ENCODE measurements at regions of chr17 and their contacts with region 1.

Region 1: DNA sequence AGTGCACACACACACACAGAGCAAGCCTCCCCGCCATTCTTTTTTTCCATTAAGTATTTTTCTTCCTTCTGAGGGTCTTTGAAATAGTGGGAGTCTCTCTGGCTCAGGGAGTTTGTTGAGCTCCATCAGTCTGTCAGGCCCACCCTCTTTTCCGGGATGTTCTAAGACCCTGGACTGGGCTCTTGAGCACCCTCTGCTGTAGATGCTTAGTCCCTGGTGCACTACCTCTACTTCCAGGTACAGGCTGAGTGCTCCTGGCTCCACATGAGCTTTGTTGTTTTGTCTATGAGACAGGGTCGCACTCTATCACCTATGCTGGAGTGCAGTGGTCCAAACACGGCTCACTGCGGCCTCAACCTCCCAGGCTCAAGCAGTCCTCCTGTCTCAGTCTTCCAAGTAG is 20.7 kb downstream of the LIMD2 start:
- DNase-seq: no peak
- H3K4me3 ChIP-seq: no peak overlapping the region
- H3K27me3 ChIP-seq: no peaks in the 10 kb centered on the region
- CTCF ChIP-seq: no peak

Region 2: GRCh38 chr17:63694229-63694949 is 15.2 kb after region 1 on chr17:
- CTCF ChIA-PET with region 1: interaction called, 10 read pairs
- POLR2A ChIA-PET with region 1: no interaction called
- DNase-seq: no peak
- H3K4me3 ChIP-seq: no peak overlapping the region
- H3K27me3 ChIP-seq: no peaks in the 10 kb centered on the region
- CTCF ChIP-seq: no peak

Region 3: DNA sequence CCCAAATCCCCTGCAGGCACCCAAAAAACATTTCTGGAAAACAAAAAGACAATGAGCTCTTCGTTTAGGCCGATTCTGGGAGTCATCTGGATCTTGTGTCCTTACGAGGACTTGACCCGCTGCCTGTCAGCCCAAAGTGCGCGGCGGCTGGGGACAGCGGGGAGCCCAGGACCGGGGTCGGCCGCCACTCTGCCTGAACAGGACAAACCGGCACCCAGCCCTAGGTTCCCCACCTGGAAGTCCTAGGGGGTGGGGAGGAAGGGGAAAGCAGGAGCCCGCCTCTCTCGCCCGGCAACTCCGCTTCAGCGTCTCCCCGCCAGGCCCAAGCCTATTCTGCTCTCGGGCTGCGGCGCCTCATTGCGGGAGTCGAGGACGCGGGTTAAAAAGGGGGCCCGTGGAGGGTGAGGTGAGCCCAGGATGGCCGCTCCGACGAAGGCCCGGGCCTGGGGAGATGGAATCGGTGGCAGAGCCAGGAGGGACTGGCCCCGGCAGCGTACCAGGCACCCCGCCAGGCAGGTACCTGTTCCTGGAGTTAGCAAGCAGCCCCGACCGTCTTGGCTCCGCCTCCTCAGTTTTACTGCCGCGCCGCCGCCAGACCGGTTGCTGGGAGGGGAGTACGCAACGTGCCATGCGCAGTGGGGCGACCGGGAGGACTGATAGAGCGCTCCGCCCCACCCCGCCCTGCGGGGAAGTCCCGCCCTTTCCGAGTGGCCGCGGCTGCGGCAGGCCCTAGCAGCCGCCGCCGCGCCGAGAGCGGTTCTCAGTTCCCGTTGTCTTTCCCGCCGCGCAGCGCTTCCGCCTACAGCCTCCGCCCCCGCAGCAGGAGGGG is 62.2 kb after region 1 on chr17 and contains the start of gene STRADA:
- CTCF ChIA-PET with region 1: no interaction called
- POLR2A ChIA-PET with region 1: no interaction called
- DNase-seq: peak; percentile 85
- H3K4me3 ChIP-seq: peak within 1 kb of the TSS; percentile 97
- H3K27me3 ChIP-seq: no peaks in the 10 kb centered on the region
- CTCF ChIP-seq: no peak
- polyA plus RNA-seq, gene STRADA: 21.0 and 30.9 TPM in 2 replicates

Region 4: GRCh38 chr17:63780522-63780921 is 101.3 kb after region 1 on chr17:
- CTCF ChIA-PET with region 1: no interaction called
- POLR2A ChIA-PET with region 1: no interaction called
- DNase-seq: no peak
- H3K4me3 ChIP-seq: no peak overlapping the region
- H3K27me3 ChIP-seq: no peaks in the 10 kb centered on the region
- CTCF ChIP-seq: no peak

Measured in BJ (cell line).